H1 (cell line): ENCODE measurements at regions of chr2 and their contacts with region 1.

Region 1: GRCh38 chr2:14903709-14904374 is 271.3 kb downstream of the LRATD1 start:
- DNase-seq: peak; percentile 50 to 95
- H3K4me3 ChIP-seq: no peak overlapping the region
- H3K27ac ChIP-seq: no peak overlapping the region
- H3K4me1 ChIP-seq: peaks cover 0 to 7% (median 3%) of the 10 kb centered on the region in 4 experiments; a peak in 5 of 7 replicates
- H3K27me3 ChIP-seq: no peaks in the 10 kb centered on the region
- CTCF ChIP-seq: peak; percentile 96 to 100 (median 96)
- EP300 ChIP-seq: no peak
- POLR2A ChIP-seq: no peak
- RAD21 ChIP-seq: peak; percentile 85 to 86

Region 2: DNA sequence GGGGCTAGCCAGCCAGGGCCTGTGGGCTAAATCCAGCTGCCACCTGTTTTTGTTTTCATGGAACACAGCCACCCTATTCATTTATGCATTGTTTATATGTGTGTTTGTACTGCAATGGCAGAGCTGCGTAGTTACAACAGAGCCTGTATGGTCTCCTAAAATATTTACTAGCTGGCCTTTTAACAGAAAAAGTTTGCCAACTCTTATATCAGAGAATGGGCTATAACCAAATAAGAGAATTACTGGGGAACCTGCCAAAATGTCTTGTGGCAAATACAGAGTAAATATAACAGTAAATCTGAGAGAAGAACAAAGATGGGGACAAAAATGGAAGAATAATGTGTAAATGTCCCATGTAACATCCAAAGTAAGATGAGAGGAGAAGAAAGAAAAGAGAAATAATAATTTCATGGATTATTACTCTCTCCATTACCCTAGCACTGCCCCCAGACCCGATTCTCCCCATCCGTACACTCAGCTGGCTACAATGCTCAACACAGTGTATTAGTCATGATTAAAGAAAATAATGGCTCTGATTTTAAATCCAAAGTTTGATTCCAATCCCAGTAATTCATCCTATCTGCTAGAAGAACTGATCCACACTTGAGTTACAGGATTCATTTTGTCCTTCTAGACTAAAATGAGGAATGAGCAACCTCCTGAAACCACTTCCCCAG is 22.1 kb before region 1 on chr2:
- CTCF ChIA-PET with region 1: interaction called, 10 read pairs
- POLR2A ChIA-PET with region 1: no interaction called
- DNase-seq: no peak
- H3K4me3 ChIP-seq: no peak overlapping the region
- H3K27ac ChIP-seq: no peak overlapping the region
- H3K4me1 ChIP-seq: no peaks in the 10 kb centered on the region
- H3K27me3 ChIP-seq: no peaks in the 10 kb centered on the region
- CTCF ChIP-seq: no peak
- EP300 ChIP-seq: no peak
- POLR2A ChIP-seq: no peak
- RAD21 ChIP-seq: no peak

Region 3: DNA sequence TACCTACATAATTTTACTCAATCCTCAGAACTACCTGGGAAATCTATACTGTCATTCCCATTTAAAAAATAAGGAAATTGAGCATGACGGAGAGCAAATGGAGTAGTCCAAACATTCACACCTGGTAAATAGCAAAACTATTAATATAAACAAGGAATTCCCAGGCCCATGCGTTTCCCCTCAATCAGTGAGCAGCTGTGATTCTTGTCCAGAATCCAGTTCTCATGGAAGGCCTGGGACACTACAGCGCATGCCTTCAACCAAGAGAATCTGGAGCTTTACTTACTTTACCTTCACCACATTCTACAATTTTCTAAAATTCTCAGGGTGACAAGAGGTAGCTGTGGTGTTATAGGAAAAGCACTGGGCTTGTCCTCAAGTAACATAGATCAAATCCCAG is 12.3 kb before region 1 on chr2:
- CTCF ChIA-PET with region 1: interaction called, 20 read pairs
- POLR2A ChIA-PET with region 1: no interaction called
- DNase-seq: no peak
- H3K4me3 ChIP-seq: no peak overlapping the region
- H3K27ac ChIP-seq: no peak overlapping the region
- H3K4me1 ChIP-seq: no peaks in the 10 kb centered on the region
- H3K27me3 ChIP-seq: no peaks in the 10 kb centered on the region
- CTCF ChIP-seq: no peak
- EP300 ChIP-seq: no peak
- POLR2A ChIP-seq: no peak
- RAD21 ChIP-seq: no peak

Region 4: DNA sequence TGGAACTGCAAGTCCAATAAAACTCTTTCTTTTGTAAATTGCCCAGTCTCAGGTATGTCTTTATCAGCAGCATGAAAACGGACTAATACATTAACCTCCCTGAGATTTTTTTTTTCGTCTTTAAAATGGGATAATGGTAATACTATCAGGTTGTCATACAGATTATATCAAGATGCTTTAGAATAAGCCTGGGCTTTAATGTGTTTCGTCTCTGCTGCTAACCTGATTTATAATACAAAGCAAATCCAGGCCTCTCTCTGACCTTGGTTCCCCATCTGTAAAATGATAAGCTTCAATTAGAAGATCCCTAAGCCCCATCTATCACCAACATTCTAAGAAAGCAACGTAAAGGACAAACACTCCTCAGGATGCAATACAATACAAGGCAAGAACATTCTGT is 12.1 kb after region 1 on chr2:
- CTCF ChIA-PET with region 1: interaction called, 52 read pairs
- POLR2A ChIA-PET with region 1: no interaction called
- DNase-seq: no peak
- H3K4me3 ChIP-seq: no peak overlapping the region
- H3K27ac ChIP-seq: no peak overlapping the region
- H3K4me1 ChIP-seq: no peaks in the 10 kb centered on the region
- H3K27me3 ChIP-seq: no peaks in the 10 kb centered on the region
- CTCF ChIP-seq: no peak
- EP300 ChIP-seq: no peak
- POLR2A ChIP-seq: no peak
- RAD21 ChIP-seq: no peak

Region 5: DNA sequence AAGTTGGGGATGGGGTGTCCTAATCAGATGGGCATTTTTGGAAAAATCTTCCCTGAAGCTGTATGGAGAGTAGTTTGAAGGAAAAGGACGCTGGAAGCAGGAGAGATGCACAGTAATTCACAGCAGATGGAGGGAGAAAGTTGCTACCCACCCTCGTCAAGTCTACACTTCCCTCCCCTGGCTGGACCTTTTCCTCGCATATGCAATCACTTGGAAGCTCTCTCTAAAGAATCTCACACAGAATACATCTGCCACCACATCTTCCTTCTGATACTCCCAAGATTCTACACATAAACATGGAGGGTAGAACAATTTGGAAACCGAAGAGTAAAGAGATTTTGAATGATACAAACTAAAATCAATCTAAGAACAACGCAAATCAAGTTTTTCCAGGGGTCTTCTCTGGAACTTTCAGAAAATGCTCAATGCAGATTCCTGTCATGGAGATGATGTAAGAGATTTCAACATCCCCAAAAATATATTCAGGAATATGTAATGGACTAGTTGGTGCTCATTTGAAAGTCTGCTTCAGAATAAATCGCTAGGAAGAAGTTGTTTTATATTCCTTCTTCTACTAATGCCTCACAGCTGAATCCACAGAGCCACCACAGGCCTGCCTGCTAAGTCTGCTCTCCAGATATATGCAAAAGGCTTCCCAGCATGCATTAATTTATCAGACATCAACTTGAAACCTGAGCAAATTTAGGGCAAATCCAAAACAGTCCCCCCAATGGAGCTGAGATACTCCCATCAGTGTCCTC is 20.2 kb after region 1 on chr2:
- CTCF ChIA-PET with region 1: interaction called, 52 read pairs
- POLR2A ChIA-PET with region 1: no interaction called
- DNase-seq: no peak
- H3K4me3 ChIP-seq: no peak overlapping the region
- H3K27ac ChIP-seq: no peak overlapping the region
- H3K4me1 ChIP-seq: no peaks in the 10 kb centered on the region
- H3K27me3 ChIP-seq: no peaks in the 10 kb centered on the region
- CTCF ChIP-seq: no peak
- EP300 ChIP-seq: no peak
- POLR2A ChIP-seq: no peak
- RAD21 ChIP-seq: no peak